ENCODE measurements at regions of chr9 and their contacts with region 1.

Region 1: GRCh38 chr9:122991370-122991830 is 42.1 kb upstream of the GPR21 start:
- H3K4me3 ChIP-seq: no peak overlapping the region
- H3K27ac ChIP-seq: no peak overlapping the region
- H3K4me1 ChIP-seq: no peaks in the 10 kb centered on the region
- CTCF ChIP-seq: no peak

Region 2: DNA sequence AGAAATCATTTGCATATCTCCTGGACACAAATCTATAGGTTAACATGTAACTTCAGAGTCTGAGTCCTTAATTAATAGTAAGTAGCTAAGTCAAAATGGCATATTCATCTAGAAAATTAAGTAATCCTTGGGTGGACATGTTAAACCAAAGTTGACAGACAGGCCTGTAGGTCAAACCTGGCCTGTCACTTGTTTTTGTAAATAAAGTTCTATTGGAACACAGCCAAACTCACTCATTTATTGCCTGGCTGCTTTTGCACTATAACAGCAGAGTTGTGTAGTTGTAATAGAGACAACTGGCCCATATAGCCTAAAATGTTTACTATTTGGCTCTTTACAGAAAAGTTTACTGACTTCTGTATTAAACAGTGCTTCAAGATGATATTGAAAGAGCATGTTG is 17.5 kb after region 1 on chr9:
- CTCF ChIA-PET with region 1: interaction called, 14 read pairs
- POLR2A ChIA-PET with region 1: no interaction called
- H3K4me3 ChIP-seq: no peak overlapping the region
- H3K27ac ChIP-seq: no peak overlapping the region
- H3K4me1 ChIP-seq: no peaks in the 10 kb centered on the region
- CTCF ChIP-seq: no peak

Region 3: DNA sequence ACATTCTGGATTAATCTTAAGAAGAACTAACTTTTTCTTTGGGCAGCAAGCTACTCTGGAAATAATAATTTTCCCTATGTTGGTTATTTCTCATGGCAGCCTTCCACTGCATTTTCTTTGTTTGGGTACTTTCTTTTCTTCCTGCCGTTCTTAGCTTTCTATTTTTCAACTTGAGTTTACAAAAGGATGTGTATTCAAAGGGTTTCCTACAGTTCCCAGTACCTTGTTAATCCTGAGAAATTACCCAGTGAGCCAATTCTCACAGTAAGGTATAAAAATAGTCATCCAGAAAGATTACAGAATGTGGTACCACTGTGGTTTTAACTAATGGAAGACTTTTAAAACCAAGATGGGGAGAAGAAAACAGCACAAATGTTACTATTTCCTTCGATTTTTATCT is 62.3 kb after region 1 on chr9:
- CTCF ChIA-PET with region 1: no interaction called
- POLR2A ChIA-PET with region 1: no interaction called
- H3K4me3 ChIP-seq: no peak overlapping the region
- H3K27ac ChIP-seq: no peak overlapping the region
- H3K4me1 ChIP-seq: no peaks in the 10 kb centered on the region
- CTCF ChIP-seq: no peak

Measured in HEK293 (cell line).